BJ (cell line): ENCODE measurements at regions of chr1 and their contacts with region 1.

Region 1: GRCh38 chr1:204806943-204807687 is 63.5 kb upstream of the NFASC start:
- DNase-seq: no peak
- H3K4me3 ChIP-seq: peak overlapping the region; percentile 46
- H3K27me3 ChIP-seq: peaks cover 8% of the 10 kb centered on the region
- CTCF ChIP-seq: peak; percentile 93

Region 2: GRCh38 chr1:204411451-204412204 is 395.5 kb before region 1 on chr1 and contains the start of gene PPP1R15B:
- CTCF ChIA-PET with region 1: no interaction called
- POLR2A ChIA-PET with region 1: no interaction called
- DNase-seq: peak; percentile 94
- H3K4me3 ChIP-seq: peak within 1 kb of the TSS; percentile 72
- H3K27me3 ChIP-seq: no peaks in the 10 kb centered on the region
- CTCF ChIP-seq: no peak
- polyA plus RNA-seq, gene PPP1R15B: 24.6 and 30.2 TPM in 2 replicates

Region 3: DNA sequence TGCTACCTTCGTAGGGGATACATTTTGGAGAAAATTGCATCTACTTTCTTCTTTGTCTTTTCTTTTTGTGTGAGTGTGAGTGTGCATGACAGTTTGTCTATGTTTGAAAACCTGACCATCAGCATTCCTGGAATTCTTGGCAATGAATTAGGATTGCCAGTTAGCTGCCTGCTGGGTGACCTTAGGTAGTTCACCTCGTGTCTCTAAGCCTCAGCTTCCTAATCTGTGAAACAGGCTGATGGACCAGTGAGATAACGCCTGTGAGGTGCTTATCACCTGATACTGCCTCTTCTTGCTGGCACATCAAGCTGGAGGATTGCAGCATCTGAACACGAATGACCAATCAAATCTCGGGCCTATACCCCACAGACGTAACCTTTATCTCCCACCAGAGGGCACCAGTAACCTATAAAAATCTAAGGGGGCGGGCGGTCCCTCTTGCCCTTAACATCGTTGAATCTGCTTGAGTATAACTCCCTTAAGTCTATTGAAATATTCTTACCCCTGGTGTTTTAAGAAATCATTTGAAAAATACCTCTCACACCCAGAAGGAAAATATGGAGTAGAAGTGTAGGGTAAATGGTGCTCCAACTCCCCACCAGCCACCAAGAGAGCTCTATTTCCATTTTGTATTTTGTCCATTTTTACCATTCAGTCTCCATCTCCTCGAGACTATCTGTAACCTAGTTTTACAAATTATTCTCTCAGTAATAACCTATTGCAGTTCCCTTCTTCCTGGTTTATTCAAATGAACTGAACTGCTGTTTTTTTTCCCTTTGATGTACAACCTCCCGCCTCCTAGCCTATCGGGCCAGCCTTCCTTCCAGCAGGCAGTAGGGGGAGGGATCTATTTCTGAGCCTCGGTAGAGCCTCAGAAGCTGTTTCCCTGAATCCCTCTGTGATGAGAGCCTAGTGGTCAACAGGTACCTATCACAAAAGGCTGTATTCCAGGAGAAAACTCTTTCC is 241.2 kb before region 1 on chr1:
- CTCF ChIA-PET with region 1: interaction called, 260 read pairs
- POLR2A ChIA-PET with region 1: no interaction called
- DNase-seq: peak; percentile 16
- H3K4me3 ChIP-seq: no peak overlapping the region
- H3K27me3 ChIP-seq: no peaks in the 10 kb centered on the region
- CTCF ChIP-seq: peak; percentile 65

Region 4: GRCh38 chr1:204775546-204775945 is 31.6 kb before region 1 on chr1:
- CTCF ChIA-PET with region 1: interaction called, 12 read pairs
- POLR2A ChIA-PET with region 1: no interaction called
- DNase-seq: no peak
- H3K4me3 ChIP-seq: no peak overlapping the region
- H3K27me3 ChIP-seq: peaks cover 19% of the 10 kb centered on the region
- CTCF ChIP-seq: no peak

Region 5: GRCh38 chr1:204828338-204828850 is 21.3 kb after region 1 on chr1:
- CTCF ChIA-PET with region 1: interaction called, 188 read pairs
- POLR2A ChIA-PET with region 1: no interaction called
- DNase-seq: no peak
- H3K4me3 ChIP-seq: peak overlapping the region; percentile 74
- H3K27me3 ChIP-seq: peaks cover 6% of the 10 kb centered on the region
- CTCF ChIP-seq: 0 out of 2 replicates have a peak, but pooled peaks have one; percentile 12

Region 6: DNA sequence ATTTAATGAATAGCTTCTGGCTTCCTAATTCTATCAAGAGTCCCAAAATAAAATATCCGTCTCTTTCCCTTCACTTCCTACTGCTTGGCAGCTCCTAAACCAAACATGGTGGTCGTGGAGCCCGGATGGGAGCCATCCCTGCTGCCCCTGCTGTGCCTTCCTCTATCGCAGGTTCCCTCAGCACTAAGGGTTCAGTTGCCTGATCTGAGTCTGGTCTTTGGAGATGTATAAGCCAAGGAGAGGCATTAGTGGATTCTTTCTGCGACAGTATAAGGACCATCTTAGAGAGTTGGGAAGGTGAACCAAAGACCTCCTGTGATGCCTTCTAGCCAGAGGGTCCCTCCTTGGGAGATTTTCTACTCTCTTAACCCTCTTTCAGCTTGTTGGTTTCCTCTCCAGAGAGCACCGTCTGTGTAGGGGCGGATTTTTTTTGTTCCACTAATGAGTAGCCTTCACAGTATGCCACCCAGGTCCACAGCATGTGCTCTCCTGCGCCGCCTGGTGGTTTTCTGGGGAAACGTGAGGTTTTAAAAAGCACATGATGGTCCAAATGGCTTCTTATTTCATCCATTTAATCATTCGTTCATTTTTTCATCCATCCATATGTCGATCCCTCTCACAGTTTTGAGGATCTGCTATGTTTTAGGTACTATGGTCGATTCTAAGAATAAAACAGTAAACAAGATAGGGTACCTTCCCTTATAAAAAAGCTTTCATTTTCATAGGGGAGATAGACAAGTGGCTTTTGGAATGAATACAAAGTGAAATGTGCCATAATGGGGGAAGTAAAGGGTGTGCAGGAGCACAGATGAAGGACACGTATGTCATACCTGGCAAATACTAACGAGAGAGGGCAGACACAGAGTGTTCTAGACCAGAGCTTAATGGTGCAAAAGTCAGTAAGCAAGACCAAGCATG is 134.6 kb after region 1 on chr1:
- CTCF ChIA-PET with region 1: interaction called, 231 read pairs
- POLR2A ChIA-PET with region 1: no interaction called
- DNase-seq: peak; percentile 4
- H3K4me3 ChIP-seq: no peak overlapping the region
- H3K27me3 ChIP-seq: no peaks in the 10 kb centered on the region; the same call in 1 of the 2 replicates
- CTCF ChIP-seq: peak; percentile 97

Region 7: GRCh38 chr1:205061665-205062069 is 254.6 kb after region 1 on chr1:
- CTCF ChIA-PET with region 1: interaction called, 10 read pairs
- POLR2A ChIA-PET with region 1: no interaction called
- DNase-seq: no peak
- H3K4me3 ChIP-seq: no peak overlapping the region
- H3K27me3 ChIP-seq: no peaks in the 10 kb centered on the region; the same call in none of the 2 replicates
- CTCF ChIP-seq: peak; percentile 91

Region 8: DNA sequence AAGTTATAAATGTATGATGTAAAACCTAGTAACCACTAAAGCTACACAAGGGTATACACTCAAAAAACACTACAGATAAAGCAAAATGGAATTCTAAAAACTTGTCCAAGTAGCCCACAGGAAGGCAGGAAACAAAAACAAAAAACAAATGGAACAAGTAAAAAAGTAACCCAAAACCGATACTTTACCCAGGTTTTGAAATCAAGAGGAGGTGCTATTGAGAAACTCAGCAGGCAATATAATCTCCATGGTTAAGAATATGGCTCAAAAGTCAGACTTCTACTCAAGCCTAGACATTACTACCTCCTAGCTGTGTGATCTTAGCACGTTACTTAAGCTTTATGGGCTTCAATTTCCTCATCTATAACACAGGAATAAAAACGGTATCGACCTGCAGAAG is 301.3 kb after region 1 on chr1:
- CTCF ChIA-PET with region 1: no interaction called
- POLR2A ChIA-PET with region 1: no interaction called
- DNase-seq: no peak
- H3K4me3 ChIP-seq: no peak overlapping the region
- H3K27me3 ChIP-seq: no peaks in the 10 kb centered on the region
- CTCF ChIP-seq: no peak

Region 9: GRCh38 chr1:205925730-205926129 is 1118.6 kb after region 1 on chr1:
- CTCF ChIA-PET with region 1: no interaction called
- POLR2A ChIA-PET with region 1: no interaction called
- DNase-seq: no peak
- H3K4me3 ChIP-seq: no peak overlapping the region
- H3K27me3 ChIP-seq: peaks cover 1% of the 10 kb centered on the region
- CTCF ChIP-seq: no peak